IMR-90 (cell line): ENCODE measurements at regions of chr21 and their contacts with region 1.

Region 1: DNA sequence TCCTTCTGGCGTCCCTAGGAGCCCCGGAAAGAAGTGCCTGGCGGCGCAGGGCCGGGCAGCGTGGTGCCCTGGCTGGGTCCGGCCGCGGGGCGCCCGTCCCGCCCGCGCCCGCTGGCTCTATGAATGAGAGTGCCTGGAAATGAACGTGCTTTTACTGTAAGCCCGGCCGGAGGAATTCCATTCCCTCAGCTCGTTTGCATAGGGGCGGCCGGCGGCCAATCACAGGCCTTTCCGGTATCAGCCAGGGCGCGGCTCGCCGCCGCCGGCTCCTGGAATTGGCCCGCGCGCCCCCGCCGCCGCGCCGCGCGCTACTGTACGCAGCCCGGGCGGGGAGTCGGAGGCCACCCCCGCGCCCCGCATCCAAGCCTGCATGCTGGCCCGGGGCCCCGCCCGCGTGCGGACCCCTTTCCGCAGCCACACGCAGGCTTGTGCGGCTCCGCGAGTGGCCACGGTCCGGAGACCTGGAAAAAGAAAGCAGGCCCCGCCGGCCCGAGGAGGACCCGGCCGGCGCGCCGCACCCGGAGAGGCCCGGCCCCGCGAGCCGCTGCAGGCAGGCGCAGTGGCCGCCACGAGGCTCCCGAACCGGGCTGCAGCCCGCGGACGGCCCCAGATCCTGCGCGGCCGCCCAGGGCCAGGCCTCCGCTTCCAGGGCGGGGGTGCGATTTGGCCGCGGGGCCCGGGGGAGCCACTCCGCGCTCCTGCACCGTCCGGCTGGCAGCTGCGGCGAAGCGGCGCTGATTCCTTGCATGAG is 160.4 kb downstream of the RUNX1 start:
- DNase-seq: peak; percentile 96
- ATAC-seq: peak; percentile 62
- H3K4me3 ChIP-seq: peak overlapping the region; percentile 99
- H3K27ac ChIP-seq: peak overlapping the region; percentile 99
- H3K4me1 ChIP-seq: no peaks in the 10 kb centered on the region
- H3K27me3 ChIP-seq: no peaks in the 10 kb centered on the region
- CTCF ChIP-seq: no peak
- POLR2A ChIP-seq: peak; percentile 98
- RAD21 ChIP-seq: peak; percentile 25

Region 2: DNA sequence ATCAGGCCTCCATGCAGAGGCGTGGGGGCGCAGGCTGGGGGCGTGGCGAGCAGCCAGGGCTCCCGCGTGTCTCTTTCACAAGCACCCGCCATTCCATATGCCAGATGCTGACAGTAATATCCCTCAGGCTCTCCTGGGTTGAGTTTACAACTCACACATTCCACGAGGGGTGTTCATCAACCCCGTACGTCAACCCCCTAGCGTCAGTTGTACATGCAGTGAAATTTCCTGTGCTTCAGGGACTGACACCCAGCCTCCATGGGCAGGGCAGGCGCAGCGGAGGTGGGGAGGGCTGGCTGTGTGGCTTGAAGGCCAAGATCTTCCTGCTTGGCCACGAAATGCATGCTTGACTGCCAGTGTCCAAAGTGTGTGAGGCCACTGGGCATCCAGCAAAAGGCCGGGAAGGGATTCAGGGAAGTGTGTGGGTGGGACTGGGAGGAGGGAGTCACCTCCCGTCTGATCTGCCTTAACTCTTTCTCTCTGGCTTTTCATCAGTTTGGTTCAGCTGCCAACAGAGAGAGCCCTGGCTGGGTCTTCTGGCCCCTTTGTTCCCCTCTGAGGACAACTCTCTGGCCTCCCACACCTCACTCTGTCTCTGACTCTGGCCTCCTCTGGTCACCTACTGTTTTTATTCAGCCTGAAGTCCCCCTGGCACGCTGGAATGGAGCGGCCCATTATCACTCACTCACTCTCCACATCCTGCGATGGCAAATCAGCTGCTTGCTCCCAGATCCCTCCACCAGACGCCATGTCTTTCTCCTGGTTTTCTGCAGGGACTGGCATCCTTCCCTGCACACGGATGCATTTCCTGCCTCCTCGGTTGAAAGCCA is 186.2 kb before region 1 on chr21:
- CTCF ChIA-PET with region 1: no interaction called
- POLR2A ChIA-PET with region 1: no interaction called
- dilution Hi-C with region 1: no loop called
- in situ Hi-C with region 1: no loop called
- intact Hi-C with region 1: loop called (anchors 1 kb)
- DNase-seq: peak; percentile 98
- ATAC-seq: peak; percentile 97
- H3K4me3 ChIP-seq: no peak overlapping the region
- H3K27ac ChIP-seq: peak overlapping the region; percentile 59
- H3K4me1 ChIP-seq: peaks cover 15% of the 10 kb centered on the region
- H3K27me3 ChIP-seq: peaks cover 1% of the 10 kb centered on the region; the same call in 1 of the 2 replicates
- CTCF ChIP-seq: no peak
- POLR2A ChIP-seq: peak; percentile 38; the same call in 1 of the 2 replicates
- RAD21 ChIP-seq: 0 out of 2 replicates have a peak, but pooled peaks have one; percentile 4

Region 3: GRCh38 chr21:34946916-34947534 is 58.3 kb after region 1 on chr21:
- CTCF ChIA-PET with region 1: no interaction called
- POLR2A ChIA-PET with region 1: no interaction called
- dilution Hi-C with region 1: no loop called
- in situ Hi-C with region 1: no loop called
- intact Hi-C with region 1: loop called (anchors 5 kb)
- DNase-seq: peak; percentile 73
- ATAC-seq: peak; percentile 70
- H3K4me3 ChIP-seq: no peak overlapping the region
- H3K27ac ChIP-seq: no peak overlapping the region
- H3K4me1 ChIP-seq: peaks cover 13% of the 10 kb centered on the region
- H3K27me3 ChIP-seq: no peaks in the 10 kb centered on the region
- CTCF ChIP-seq: peak; percentile 23; the same call in 1 of the 2 replicates
- POLR2A ChIP-seq: no peak
- RAD21 ChIP-seq: peak; percentile 34

Region 4: DNA sequence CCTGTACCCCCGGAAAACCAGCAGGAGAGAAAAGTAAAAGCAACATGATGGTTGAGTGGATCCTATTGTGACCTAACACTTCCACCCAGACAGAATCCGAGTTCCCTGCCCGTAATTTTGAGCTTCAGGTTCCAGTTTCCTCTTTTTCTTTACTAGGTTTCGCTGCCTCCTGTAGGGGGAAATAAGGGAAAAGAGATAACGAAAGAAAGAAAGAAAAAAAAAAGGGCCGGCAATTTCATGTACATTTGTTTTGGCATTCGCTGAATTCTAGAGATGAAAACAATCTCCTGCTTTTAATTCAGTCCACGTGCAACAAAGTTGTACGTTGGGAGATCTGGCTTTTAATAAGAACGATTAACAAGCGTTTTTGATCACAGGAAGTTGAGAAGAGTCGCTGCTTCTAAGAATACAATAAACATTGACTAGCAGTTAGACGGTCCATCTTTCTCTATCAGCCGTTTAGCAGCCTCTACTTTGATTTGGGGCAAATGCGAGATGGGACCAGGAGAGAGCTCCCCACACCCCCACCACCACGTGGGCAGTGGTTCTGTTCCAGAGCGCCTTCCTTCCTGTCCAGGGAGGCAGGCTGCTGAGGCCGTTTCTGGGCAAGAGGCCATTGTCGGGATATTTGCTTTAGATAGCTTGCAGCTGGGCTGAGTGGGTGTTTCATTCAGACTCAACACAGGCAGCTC is 316.3 kb after region 1 on chr21:
- CTCF ChIA-PET with region 1: interaction called, 6 read pairs
- POLR2A ChIA-PET with region 1: interaction called, 13 read pairs
- dilution Hi-C with region 1: no loop called
- in situ Hi-C with region 1: loop called (anchors 5 kb)
- intact Hi-C with region 1: loop called (anchors 1 kb)
- DNase-seq: peak; percentile 98
- ATAC-seq: peak; percentile 78
- H3K4me3 ChIP-seq: peak overlapping the region; percentile 25; the same call in 1 of the 2 replicates
- H3K27ac ChIP-seq: peak overlapping the region; percentile 91
- H3K4me1 ChIP-seq: peaks cover 40% of the 10 kb centered on the region
- H3K27me3 ChIP-seq: no peaks in the 10 kb centered on the region
- CTCF ChIP-seq: peak; percentile 44
- POLR2A ChIP-seq: peak; percentile 53; the same call in 1 of the 2 replicates
- RAD21 ChIP-seq: peak; percentile 43

Region 5: DNA sequence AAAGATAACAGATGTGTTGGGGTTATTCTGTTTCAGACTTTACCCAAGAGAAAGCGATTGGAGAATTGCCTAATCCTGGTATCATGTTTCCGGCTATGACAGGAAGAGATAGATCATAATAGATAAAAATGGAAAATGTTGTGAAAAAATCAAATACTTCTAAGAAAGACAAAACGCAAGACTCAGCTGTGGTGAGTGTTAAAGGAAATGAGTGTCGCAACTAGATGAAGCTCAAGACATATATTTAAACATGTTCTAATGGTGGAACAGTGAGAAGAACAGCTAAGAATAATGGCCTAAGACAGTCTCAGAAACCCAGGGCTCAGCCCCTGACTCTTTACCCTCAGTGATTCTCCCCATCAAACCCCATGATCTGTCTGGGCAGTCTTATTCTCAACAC is 587.0 kb after region 1 on chr21:
- CTCF ChIA-PET with region 1: interaction called, 3 read pairs
- POLR2A ChIA-PET with region 1: no interaction called
- dilution Hi-C with region 1: no loop called
- in situ Hi-C with region 1: no loop called
- intact Hi-C with region 1: loop called (anchors 5 kb)
- DNase-seq: peak; percentile 75
- ATAC-seq: peak; percentile 48
- H3K4me3 ChIP-seq: no peak overlapping the region
- H3K27ac ChIP-seq: peak overlapping the region; percentile 84; the same call in 1 of the 2 replicates
- H3K4me1 ChIP-seq: peaks cover 14% of the 10 kb centered on the region
- H3K27me3 ChIP-seq: no peaks in the 10 kb centered on the region
- CTCF ChIP-seq: no peak
- POLR2A ChIP-seq: no peak
- RAD21 ChIP-seq: no peak

Region 6: GRCh38 chr21:35932232-35932911 is 1043.6 kb after region 1 on chr21:
- CTCF ChIA-PET with region 1: interaction called, 4 read pairs
- POLR2A ChIA-PET with region 1: no interaction called
- dilution Hi-C with region 1: no loop called
- in situ Hi-C with region 1: loop called (anchors 10 kb)
- intact Hi-C with region 1: loop called (anchors 5 kb)
- DNase-seq: peak; percentile 95
- ATAC-seq: peak; percentile 86
- H3K4me3 ChIP-seq: peak overlapping the region; percentile 16; the same call in 1 of the 2 replicates
- H3K27ac ChIP-seq: peak overlapping the region; percentile 57
- H3K4me1 ChIP-seq: peaks cover 7% of the 10 kb centered on the region; the same call in 1 of the 2 replicates
- H3K27me3 ChIP-seq: no peaks in the 10 kb centered on the region
- CTCF ChIP-seq: no peak
- POLR2A ChIP-seq: 0 out of 2 replicates have a peak, but pooled peaks have one; percentile 30
- RAD21 ChIP-seq: no peak; the same call in 1 of the 2 replicates